Adrenal gland (tissue), 19 donors: ENCODE measurements at regions of chr21 and their contacts with region 1.

Region 1: DNA sequence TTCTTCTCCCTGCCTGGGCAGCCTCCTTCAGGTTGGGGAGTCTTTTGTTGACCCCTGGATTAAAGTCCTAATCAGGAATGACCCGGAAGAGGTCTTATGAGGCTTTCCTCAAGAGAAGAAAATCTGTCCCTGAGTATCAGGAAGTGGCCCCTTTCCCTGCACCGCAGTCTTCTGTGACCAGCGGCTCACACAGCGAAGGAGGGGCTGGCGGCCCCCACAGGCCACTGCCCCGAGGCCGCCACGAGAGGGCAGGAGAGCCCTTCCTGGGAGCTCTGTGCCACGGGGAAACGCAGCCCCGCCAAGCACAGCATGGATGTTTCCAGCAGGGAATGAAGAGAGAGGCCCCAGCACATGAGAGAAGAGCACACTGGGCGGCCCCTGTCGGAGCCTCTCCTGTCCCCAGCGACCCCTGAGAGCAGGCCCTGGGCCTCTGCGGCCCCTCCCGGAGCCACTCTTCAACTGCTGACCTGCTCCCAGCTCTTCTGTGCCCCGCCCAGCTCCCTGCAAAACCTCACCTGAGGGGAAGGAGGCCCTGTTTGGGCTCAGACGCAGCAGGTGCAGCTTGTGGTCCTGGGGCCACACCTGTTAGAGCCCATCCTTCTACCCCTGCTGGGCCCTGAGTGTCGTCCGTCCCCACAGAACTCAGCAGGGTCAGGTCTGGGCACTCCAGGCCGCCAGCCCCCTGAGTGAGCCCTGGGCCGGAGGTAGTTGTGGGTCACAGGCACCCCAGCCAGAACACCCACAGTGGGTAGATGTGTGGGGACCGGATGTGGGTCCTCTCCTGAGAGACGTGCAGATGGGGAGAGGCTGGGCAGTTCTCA is 4.9 kb upstream of the POFUT2 start:
- DNase-seq: peak; percentile 89 to 95 (median 93)
- H3K4me3 ChIP-seq: no peak overlapping the region
- H3K27ac ChIP-seq: peak overlapping the region; percentile 68 to 99 (median 95)
- H3K4me1 ChIP-seq: peaks cover 45 to 65% of the 10 kb centered on the region in 2 donors
- H3K27me3 ChIP-seq: no peaks in the 10 kb centered on the region
- CTCF ChIP-seq: peak; percentile 97 to 100 (median 99)
- POLR2A ChIP-seq: peak in 1 of 2 donors; percentile 34

Region 2: GRCh38 chr21:45140346-45140940 is 152.2 kb before region 1 on chr21:
- intact Hi-C with region 1: loop called in 1 of 2 experiments (anchors 5 kb)
- DNase-seq: peak; percentile 80 to 94 (median 88)
- H3K4me3 ChIP-seq: no peak overlapping the region
- H3K27ac ChIP-seq: no peak overlapping the region
- H3K4me1 ChIP-seq: peaks cover 6 to 7% of the 10 kb centered on the region in 2 donors
- H3K27me3 ChIP-seq: no peaks in the 10 kb centered on the region
- CTCF ChIP-seq: peak; percentile 81 to 98 (median 90)
- POLR2A ChIP-seq: no peak

Region 3: GRCh38 chr21:45209046-45209445 is 83.6 kb before region 1 on chr21:
- intact Hi-C with region 1: no loop called
- DNase-seq: no peak
- H3K4me3 ChIP-seq: no peak overlapping the region
- H3K27ac ChIP-seq: no peak overlapping the region
- H3K4me1 ChIP-seq: no peaks in the 10 kb centered on the region
- H3K27me3 ChIP-seq: no peaks in the 10 kb centered on the region
- CTCF ChIP-seq: no peak
- POLR2A ChIP-seq: no peak

Region 4: DNA sequence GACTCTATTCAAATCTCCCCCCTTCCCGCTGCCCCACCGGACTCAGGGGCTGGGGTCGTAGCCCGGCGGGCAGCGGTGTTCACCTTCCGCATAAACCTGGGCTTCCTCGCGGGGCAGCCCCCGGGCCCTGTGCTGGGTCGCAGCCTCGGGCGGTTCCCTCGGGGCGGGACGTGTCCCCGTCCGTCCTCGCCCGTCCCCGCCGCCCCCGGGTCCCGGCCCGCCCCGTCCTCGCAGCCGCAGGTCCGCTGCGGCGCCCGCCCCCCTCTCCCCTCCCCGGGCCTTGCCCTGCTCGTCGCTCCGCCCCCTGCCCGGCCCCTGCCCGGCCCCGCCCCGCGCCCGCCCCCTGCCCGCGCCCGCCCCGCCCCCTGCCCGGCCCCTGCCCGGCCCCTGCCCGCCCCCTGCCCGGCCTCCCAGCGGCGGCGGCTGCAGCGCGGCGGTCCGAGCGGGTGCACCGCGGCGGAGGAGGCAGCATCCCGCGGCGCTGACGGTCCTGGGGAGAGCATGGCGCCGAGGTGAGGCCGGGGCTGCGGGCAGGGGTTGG is 112.2 kb after region 1 on chr21 and contains the start of gene COL18A1:
- intact Hi-C with region 1: loop called in 1 of 2 experiments (anchors 10 kb)
- DNase-seq: peak; percentile 55 to 83 (median 68)
- H3K4me3 ChIP-seq: peak within 1 kb of the TSS in 2 of 4 donors; percentile 19 to 91
- H3K27ac ChIP-seq: peak within 1 kb of the TSS; percentile 78 to 96 (median 88)
- H3K4me1 ChIP-seq: peaks cover 11 to 38% of the 10 kb centered on the region in 2 donors
- H3K27me3 ChIP-seq: no peaks in the 10 kb centered on the region
- CTCF ChIP-seq: no peak
- POLR2A ChIP-seq: peak in 1 of 2 donors; percentile 28
- total RNA-seq, gene COL18A1: 13.8 to 244 (median 132) TPM

Region 5: DNA sequence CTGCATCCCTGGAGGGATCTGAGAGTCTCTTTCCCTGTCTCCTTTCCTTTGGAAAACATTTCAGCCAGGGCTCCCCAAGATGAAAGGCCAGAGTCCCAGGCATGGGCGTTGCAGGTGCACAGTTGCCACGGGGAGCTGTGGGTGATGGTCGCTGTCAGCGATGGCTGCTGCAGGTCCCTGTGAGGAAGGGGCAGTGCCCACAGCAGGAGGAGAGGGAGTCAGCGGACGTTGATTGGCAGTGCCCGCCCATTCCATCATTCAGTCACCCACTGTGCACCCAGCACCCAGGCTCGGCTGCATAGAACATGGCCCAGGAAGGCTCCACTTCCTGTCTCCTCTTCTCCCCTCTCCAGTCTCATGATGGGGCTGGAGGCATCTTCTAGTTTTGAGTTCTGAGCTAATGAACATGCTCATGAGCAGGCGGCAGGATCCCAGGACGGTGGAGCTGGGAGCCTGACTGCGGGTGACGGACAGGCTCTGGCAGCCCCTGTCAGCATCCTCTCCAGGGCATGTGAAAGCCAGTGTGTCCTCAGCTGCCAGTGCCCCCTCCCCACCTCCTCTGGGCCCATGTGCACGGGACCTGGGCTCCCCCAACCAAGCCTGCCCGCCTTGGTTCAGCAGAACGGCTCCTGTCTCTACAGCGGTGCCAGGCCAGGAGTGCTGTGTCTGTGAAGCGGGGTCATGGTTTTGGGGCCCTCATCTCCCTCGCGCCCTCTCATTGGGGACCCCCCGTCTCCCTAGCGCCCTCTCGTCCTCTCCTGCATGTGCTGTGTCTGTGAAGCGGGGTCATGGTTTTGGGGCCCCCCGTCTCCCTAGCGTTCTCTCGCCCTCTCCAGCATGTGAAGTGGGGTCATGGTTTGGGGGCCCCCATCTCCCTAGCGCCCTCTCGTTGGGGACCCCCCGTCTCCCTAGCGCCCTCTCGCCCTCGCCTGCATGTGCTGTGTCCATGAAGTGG is 136.9 kb after region 1 on chr21:
- intact Hi-C with region 1: no loop called
- DNase-seq: no peak
- H3K4me3 ChIP-seq: no peak overlapping the region
- H3K27ac ChIP-seq: peak overlapping the region in 2 of 5 donors; percentile 74 to 90
- H3K4me1 ChIP-seq: peaks cover 30 to 46% of the 10 kb centered on the region in 2 donors
- H3K27me3 ChIP-seq: no peaks in the 10 kb centered on the region
- CTCF ChIP-seq: no peak
- POLR2A ChIP-seq: no peak